Activated CD8-positive, alpha-beta T cell treated with anti-CD3 and anti-CD28 coated beads, Interleukin-2, amount 10 ng/mL, durations not matched to agents 7 days and 5 days (primary cell): ENCODE measurements at regions of chr15 and their contacts with region 1.

Region 1: GRCh38 chr15:78618490-78618934 is 2.3 kb downstream of the CHRNA3 start:
- DNase-seq: peak; percentile 89
- ATAC-seq: peak; percentile 54
- H3K4me3 Mint-ChIP-seq: no peak overlapping the region
- H3K27ac Mint-ChIP-seq: no peak overlapping the region
- H3K4me1 Mint-ChIP-seq: peaks cover 22% of the 10 kb centered on the region
- H3K27me3 Mint-ChIP-seq: peaks cover 39% of the 10 kb centered on the region

Region 2: DNA sequence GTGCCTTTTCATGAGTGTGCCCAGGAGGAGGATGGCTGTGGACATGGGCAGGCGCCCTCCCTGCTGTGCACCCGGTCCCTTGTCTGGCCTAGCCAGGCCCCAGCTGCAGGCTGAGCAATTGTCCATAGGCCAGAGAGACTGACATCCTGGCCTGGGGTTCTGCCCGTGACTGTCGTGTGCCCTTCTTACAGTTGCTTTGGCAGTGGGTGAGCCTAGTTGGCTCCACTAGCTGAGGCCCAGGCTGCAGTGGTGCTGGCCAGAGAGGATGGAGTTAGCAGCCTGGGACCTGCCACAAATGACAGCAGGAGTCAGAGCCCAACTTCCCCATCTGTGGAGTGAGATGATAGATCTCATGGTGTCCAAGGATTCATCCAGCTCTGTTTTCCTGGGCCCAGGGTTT is 31.5 kb after region 1 on chr15:
- CTCF ChIA-PET with region 1: no interaction called
- POLR2A ChIA-PET with region 1: no interaction called
- DNase-seq: no peak
- ATAC-seq: no peak
- H3K4me3 Mint-ChIP-seq: no peak overlapping the region
- H3K27ac Mint-ChIP-seq: no peak overlapping the region
- H3K4me1 Mint-ChIP-seq: no peaks in the 10 kb centered on the region
- H3K27me3 Mint-ChIP-seq: peaks cover 5% of the 10 kb centered on the region

Region 3: DNA sequence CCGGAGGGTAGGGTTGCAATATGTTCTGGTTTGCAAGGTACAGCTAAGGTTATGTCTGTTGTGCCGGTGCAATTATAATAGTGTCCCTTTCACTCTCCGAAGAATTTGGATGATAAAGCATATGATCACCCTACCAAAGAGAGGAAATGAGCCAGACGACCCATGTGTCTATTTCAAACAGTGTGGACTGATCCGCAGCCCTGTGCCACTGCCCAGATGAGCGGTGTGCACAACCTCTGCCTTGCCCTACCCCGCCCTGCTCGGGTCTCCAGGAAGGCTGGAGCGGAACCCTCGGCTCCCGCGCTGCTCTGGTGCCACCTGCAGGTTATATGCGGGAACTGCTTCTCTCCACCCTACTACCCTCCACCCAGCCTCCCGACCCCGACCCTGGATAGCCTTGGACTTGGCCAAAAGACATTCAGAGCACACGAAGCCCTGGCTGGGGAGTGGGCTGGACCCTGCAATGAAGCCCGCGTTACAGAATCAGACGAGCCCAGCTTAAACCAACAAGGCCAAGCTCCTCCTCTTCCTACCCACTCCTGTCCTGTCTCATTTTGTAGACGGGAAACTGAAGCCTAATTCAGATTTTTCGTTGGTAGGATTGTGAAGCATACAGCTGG is 90.9 kb after region 1 on chr15:
- CTCF ChIA-PET with region 1: interaction called, 46 read pairs
- POLR2A ChIA-PET with region 1: no interaction called
- DNase-seq: peak; percentile 75
- ATAC-seq: peak; percentile 97
- H3K4me3 Mint-ChIP-seq: peak overlapping the region; percentile 23
- H3K27ac Mint-ChIP-seq: no peak overlapping the region
- H3K4me1 Mint-ChIP-seq: peaks cover 10% of the 10 kb centered on the region
- H3K27me3 Mint-ChIP-seq: peaks cover 24% of the 10 kb centered on the region